ENCODE measurements at regions of chr19 and their contacts with region 1.

Region 1: DNA sequence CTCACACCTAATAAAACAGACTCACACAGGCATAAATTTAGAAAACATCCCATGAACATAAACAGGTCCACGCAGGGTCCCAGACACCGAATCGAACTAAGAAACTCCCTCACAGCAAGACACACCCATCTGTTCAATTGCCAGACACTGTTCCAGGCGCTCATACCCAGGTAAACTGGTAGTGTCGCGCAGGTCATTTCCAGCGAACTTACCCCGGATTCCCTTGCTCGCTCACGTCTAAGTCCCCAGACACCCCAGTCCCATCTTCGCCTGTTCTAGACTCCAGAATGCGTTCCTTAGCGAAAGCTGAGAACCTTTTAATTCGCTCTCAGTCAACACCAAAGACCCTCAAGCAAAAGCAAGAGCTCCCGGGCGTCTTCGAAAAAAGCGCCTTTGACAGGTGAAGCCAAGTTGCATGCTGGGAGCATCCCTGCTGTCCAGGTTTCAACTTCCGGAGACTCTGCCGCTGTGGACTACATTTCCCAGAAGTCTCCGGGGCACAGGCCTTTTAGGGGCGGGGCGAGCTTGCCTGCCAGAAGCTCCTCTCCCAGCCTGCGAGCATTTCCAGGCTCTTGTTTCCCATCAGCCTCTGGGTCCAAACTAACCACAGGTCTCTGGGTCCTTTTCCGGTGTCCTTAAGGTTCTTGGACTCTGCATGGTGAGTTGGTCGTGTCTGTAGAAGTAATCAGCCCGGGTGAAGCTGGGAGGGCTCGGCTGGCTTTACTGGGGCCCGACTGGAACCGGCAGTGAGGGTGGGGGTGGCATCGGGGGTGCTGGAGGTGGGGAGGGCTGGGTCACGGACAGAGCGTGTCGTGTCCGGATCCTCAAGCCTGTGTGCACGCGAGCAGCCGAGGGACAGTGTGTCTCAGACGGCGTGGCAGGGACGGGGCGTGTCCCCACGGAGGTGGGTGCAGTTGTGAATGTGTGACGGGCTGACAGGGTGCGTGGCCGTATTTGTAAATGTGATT is at the start of gene ZNF283:
- DNase-seq: peak; percentile 60 to 94
- H3K4me3 ChIP-seq: peak within 1 kb of the TSS; percentile 56 to 75
- H3K27ac ChIP-seq: peak within 1 kb of the TSS; percentile 48 to 51
- H3K4me1 ChIP-seq: peaks cover 3 to 10% of the 10 kb centered on the region in 2 donors
- H3K27me3 ChIP-seq: no peaks in the 10 kb centered on the region
- CTCF ChIP-seq: no peak
- total RNA-seq, gene ZNF283: not detected

Region 2: GRCh38 chr19:43305658-43306057 is 521.4 kb before region 1 on chr19:
- intact Hi-C with region 1: no loop called
- DNase-seq: no peak
- H3K4me3 ChIP-seq: no peak overlapping the region
- H3K27ac ChIP-seq: no peak overlapping the region
- H3K4me1 ChIP-seq: no peaks in the 10 kb centered on the region
- H3K27me3 ChIP-seq: no peaks in the 10 kb centered on the region
- CTCF ChIP-seq: no peak

Region 3: DNA sequence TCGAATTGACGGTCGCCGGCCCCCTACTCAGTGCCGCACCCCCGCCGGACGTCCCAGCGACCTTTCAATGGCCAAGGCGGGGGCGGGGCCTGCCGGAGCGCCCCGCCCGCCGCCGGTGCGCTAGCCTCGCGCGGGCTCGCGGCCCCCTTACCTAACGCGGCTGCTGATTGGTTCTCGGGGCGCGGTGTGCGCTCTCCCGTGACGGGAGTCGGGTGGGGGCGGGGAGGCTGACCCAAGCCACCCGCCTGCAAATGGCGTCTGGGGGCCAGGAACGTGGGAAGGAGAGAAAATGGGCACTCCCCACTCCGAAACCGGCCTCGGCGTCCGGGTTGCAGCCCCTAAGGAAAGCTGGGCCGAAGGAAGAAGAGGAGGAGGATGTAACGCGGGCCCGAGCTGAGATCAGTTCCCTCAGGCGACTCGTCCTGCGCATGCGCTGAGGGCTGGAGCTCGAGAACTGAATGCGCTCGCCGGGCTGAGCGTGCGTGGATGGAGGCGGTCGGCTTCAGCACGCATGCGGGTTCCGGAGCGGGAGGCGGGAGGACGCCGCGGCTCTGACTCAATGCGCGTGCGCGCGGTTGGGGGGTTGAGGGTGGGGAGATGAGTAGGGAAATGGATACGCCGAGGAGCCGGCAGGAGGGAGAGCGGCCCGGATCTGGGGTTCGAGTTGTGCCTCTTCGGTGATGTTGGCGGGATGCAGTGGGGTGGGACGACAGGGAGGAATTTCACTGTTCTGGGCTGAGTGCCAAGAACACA is 72.4 kb before region 1 on chr19 and contains the start of gene SMG9:
- intact Hi-C with region 1: loop called (anchors 2 kb)
- DNase-seq: peak; percentile 87 to 98
- H3K4me3 ChIP-seq: peak within 1 kb of the TSS; percentile 77 to 92
- H3K27ac ChIP-seq: peak within 1 kb of the TSS; percentile 99
- H3K4me1 ChIP-seq: peaks cover 3 to 26% of the 10 kb centered on the region in 2 donors
- H3K27me3 ChIP-seq: no peaks in the 10 kb centered on the region
- CTCF ChIP-seq: no peak
- total RNA-seq, gene SMG9: 126 TPM

Region 4: DNA sequence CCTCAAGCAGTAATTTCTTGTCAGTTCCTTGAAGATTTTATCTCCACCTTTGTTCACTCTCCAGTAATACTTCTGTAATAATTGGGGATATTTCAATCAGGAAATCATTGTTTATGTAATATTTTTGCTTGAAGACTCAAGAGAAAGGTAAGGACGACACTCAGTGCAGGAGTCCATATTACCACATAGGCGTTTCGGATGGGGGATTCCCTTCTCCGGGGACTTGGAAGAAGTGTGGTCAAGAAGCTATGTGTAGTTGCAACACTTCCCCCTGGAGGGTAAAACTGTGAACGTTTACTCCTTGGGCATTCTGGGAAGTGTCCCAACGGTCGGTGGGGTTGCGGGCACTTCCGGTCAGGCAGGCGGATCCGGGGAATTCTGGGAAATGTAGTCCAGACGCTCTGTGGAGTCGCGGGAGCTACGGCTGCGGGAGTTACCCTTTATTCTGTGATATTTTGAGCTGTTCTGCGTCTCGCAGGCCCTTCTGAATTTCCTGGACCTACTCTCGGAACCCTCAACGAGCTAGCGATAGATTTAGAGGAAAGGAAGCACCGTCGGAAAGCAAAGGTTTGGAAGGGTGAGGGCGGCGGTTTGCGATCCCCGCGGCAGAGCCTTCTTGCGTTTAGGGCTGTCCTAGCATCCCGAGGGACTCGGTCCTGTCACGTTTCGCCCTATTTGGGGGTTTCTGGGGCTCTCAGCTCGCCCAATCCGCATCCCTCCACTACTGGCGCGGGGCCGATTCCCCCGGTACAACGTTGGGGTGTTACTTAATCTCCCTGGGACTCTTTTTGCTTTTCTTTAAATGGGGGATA is 124.0 kb after region 1 on chr19 and contains the start of gene ZNF221:
- intact Hi-C with region 1: loop called (anchors 1 kb)
- DNase-seq: peak; percentile 58 to 94
- H3K4me3 ChIP-seq: peak within 1 kb of the TSS; percentile 72 to 88
- H3K27ac ChIP-seq: peak within 1 kb of the TSS; percentile 57 to 73
- H3K4me1 ChIP-seq: no peaks in the 10 kb centered on the region
- H3K27me3 ChIP-seq: no peaks in the 10 kb centered on the region
- CTCF ChIP-seq: peak; percentile 22 to 52 (median 47)
- total RNA-seq, gene ZNF221: 2.6 TPM